GM12878 (cell line): ENCODE measurements at regions of chr1 and their contacts with region 1.

Region 1: DNA sequence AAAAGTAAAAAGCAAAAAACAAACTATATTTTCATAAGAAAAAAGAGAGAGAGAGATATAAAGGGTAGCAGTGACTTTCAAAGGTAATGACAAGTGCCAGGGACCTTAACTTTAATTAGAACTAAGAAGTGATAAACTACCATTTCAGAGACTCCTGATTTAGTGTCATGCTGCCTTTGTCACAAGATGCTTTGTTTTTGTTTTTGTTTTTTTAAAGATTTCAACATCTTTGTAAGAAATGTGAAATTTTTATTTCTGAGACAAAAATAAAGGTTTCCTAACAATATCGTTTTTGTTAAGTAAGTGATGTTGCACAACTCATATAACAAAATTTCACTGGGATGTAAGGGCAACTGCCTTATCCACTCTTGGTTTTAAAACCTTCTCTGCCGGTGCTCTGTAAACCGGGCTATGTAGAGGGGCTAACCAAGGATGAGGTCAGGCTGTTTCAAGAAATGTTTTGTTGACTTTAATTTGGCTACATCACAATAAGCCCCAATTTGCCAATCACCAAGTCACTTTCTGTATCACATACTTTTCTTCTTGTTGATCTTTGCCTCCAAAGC is 35.2 kb upstream of the SYT2 start:
- DNase-seq: no peak
- ATAC-seq: no peak
- H3K4me3 ChIP-seq: no peak overlapping the region
- H3K27ac ChIP-seq: no peak overlapping the region
- H3K4me1 ChIP-seq: no peaks in the 10 kb centered on the region
- H3K27me3 ChIP-seq: no peaks in the 10 kb centered on the region
- CTCF ChIP-seq: no peak
- EP300 ChIP-seq: no peak
- POLR2A ChIP-seq: no peak
- RAD21 ChIP-seq: no peak

Region 2: DNA sequence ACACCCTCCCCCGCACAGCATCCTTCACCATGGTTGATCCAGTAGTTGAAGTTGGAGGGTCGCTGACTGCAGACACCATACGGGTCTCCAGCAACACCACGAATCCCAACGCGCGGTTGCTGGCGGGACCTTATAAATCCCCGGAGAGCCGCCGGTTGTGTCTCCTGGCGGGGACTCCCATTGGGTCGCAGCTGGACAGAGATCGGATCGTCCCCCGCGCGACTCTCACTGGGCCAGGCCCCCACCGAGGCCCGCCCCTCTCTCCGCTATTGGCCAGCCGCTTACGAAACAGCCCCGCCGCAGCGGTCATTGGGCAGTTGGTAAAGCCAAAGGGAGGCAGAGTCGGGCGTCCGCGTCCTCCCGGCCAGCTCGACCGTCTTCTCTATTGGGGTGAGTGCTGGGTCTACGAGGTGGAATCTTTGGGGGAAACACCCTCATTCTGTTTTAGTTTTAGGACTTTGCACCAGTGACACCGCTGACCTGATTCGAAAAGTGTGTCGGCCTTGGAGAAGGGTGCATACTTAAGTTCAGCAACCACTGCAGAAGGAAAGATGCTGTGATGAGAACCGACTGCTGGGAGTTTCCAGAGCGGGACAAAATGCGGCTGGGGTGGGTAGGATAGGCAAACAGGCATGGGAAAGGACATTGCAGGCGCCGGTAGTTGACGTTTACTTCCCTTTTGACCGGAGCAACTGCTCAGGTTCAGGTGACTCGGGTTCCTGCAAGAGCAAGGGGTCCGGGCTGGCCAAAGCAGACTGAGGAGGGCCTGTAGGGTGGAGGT is 116.2 kb after region 1 on chr1:
- CTCF ChIA-PET with region 1: interaction called, 3 read pairs
- POLR2A ChIA-PET with region 1: no interaction called
- RAD21 ChIA-PET with region 1: no interaction called
- SMC1A ChIA-PET with region 1: no interaction called
- in situ Hi-C with region 1: no loop called
- intact Hi-C with region 1: loop called (anchors 5 kb)
- DNase-seq: no peak
- ATAC-seq: peak; percentile 98
- H3K4me3 ChIP-seq: peak overlapping the region; percentile 77
- H3K27ac ChIP-seq: no peak overlapping the region
- H3K4me1 ChIP-seq: no peaks in the 10 kb centered on the region
- H3K27me3 ChIP-seq: peaks cover 5 to 7% of the 10 kb centered on the region in 2 experiments; a peak in 3 of 4 replicates
- CTCF ChIP-seq: no peak
- EP300 ChIP-seq: no peak
- POLR2A ChIP-seq: no peak
- RAD21 ChIP-seq: no peak